A549 (cell line): ENCODE measurements at regions of chr19 and their contacts with region 1.

Region 1: GRCh38 chr19:10987621-10988297 is 26.9 kb downstream of the SMARCA4 start:
- DNase-seq: no peak
- ATAC-seq: no peak
- H3K4me3 ChIP-seq: no peak overlapping the region
- H3K27ac ChIP-seq: no peak overlapping the region
- H3K4me1 ChIP-seq: no peaks in the 10 kb centered on the region
- CTCF ChIP-seq: no peak
- EP300 ChIP-seq: no peak
- POLR2A ChIP-seq: no peak
- RAD21 ChIP-seq: no peak

Region 2: GRCh38 chr19:10876459-10877240 is 111.1 kb before region 1 on chr19:
- CTCF ChIA-PET with region 1: no interaction called
- POLR2A ChIA-PET with region 1: interaction called, 10 read pairs
- DNase-seq: no peak
- ATAC-seq: no peak
- H3K4me3 ChIP-seq: no peak overlapping the region
- H3K27ac ChIP-seq: no peak overlapping the region
- H3K4me1 ChIP-seq: peaks cover 22% of the 10 kb centered on the region; the same call in 2 of the 3 replicates
- CTCF ChIP-seq: no peak
- EP300 ChIP-seq: no peak
- POLR2A ChIP-seq: no peak
- RAD21 ChIP-seq: no peak

Region 3: GRCh38 chr19:10968527-10969135 is 19.1 kb before region 1 on chr19:
- CTCF ChIA-PET with region 1: no interaction called
- POLR2A ChIA-PET with region 1: no interaction called
- DNase-seq: no peak
- ATAC-seq: no peak
- H3K4me3 ChIP-seq: no peak overlapping the region
- H3K27ac ChIP-seq: no peak overlapping the region
- H3K4me1 ChIP-seq: peaks cover 6% of the 10 kb centered on the region; the same call in 2 of the 3 replicates
- CTCF ChIP-seq: no peak
- EP300 ChIP-seq: no peak
- POLR2A ChIP-seq: no peak
- RAD21 ChIP-seq: no peak

Region 4: DNA sequence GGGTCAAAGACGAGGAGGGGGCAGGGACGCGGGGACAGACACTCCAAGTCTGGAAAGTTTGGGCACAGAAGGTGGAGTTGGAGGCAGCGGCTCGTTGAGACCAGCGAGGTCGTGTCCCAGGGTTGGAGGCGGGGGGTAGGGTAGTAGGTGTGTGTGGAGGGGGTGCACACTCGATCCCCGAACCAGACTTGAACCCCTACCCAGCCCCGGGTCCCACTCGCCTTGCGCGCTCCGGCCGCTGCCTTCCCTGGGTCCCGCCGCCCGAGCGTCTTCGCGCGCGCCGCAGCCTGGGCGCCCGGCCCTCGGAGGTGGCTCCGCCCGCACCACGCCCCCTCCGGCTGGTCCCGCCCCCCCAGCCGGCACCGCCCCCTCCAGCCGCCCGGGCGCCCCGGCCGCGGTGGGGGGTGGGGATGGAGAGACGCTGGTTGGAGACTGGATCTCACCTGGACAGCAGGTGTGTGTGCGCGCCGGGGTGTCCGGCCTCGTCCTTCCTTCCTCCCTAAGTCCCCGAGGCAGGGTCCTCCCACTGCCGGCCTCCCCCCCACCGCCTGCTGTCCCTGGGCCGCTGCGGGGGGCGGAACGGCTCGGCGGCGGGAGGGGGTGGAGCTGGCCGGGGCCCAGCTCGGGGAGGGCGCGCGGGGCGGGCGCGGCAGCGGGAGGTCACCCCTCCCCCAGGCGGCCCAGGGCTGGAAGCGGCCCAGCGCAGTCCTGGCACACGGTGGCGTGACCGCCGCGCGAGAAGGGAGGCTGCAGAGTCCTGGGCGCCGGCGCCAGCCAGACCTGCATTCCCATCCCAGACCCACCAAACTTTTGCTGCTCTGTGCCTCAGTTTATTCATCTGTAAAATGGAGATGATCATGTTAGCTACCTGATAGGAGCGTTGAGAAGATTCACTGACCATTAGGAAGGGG is 209.8 kb after region 1 on chr19 and contains the start of gene KANK2:
- CTCF ChIA-PET with region 1: no interaction called
- POLR2A ChIA-PET with region 1: no interaction called
- DNase-seq: peak; percentile 75 to 77
- ATAC-seq: peak; percentile 84 to 86
- H3K4me3 ChIP-seq: peak within 1 kb of the TSS; percentile 66
- H3K27ac ChIP-seq: peak within 1 kb of the TSS; percentile 92 to 98
- H3K4me1 ChIP-seq: peaks cover 37% of the 10 kb centered on the region
- CTCF ChIP-seq: peak; percentile 5; the same call in 1 of the 3 replicates
- EP300 ChIP-seq: peak in 1 of 2 experiments; percentile 36; a peak in 2 of 5 replicates
- POLR2A ChIP-seq: peak; percentile 60
- RAD21 ChIP-seq: no peak
- polyA plus RNA-seq, gene KANK2: 20.5 and 35.5 TPM in 2 replicates